GM13976 (cell line): ENCODE measurements at regions of chr1 and their contacts with region 1.

Region 1: DNA sequence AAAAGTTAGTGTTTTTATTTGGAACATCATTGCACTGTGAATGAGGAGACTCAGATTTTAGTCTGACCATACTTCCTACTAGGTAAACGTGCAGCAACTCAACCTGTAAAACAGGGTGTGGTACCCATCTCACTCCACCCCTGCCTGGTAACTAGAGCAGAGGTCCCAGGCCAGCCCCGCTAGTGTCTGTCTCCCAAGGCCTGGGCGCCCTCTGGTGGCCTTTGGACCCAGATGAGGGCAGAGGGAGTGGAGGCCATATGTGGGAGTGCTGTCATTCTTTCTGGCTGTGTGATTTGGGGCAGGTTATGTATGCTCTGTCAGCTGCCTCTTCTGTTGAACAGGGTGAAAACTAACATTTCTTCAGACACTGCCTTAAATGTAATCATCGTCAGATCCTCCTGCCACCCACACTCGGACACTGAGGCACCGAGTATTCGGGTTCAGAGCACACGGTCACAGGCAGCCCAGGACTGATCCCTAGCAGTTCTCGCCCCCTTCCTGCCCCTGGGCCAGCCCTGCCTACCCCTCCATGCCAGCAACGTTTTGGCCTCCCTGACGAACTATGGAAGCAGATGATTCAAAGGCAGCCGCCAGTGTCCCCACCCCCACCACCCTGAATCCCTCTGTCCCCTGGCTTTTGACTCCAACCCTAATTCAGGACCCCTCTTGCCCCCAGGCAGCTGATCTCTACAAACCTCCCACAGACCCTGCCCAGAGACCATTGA is 76.0 kb downstream of the CD247 start:
- DNase-seq: peak; percentile 89
- CTCF ChIP-seq: peak; percentile 80

Region 2: DNA sequence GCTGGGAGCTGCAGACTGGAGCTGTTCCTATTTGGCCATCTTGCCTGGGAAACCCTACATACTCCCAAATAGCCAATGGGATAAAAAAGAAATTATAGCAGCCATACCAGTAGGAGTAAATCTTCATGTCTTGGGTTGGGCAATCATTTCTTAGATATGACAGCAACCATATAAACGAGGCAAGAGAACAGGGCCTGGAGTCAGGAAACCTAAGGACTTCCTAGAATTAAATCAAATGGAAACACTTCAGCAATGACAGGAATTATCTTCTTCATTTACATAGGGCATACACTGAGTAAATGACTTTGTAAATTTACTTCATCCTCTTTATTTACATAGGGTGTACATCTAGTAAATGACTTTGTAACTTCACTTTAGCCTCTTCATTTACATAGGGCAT is 889.6 kb before region 1 on chr1:
- in situ Hi-C with region 1: no loop called
- DNase-seq: no peak
- CTCF ChIP-seq: no peak

Region 3: GRCh38 chr1:167263819-167264464 is 178.3 kb before region 1 on chr1:
- in situ Hi-C with region 1: loop called (anchors 10 kb)
- DNase-seq: no peak
- CTCF ChIP-seq: no peak